Activated CD8-positive, alpha-beta T cell treated with anti-CD3 and anti-CD28 coated beads for 36 hours (primary cell): ENCODE measurements at regions of chr17 and their contacts with region 1.

Region 1: GRCh38 chr17:77429919-77430752 is 289.4 kb downstream of the SEC14L1 start:
- DNase-seq: peak; percentile 89
- ATAC-seq: peak; percentile 34
- H3K4me3 Mint-ChIP-seq: no peak overlapping the region
- H3K27ac Mint-ChIP-seq: peak overlapping the region; percentile 91
- H3K4me1 Mint-ChIP-seq: peaks cover 83% of the 10 kb centered on the region
- H3K27me3 Mint-ChIP-seq: no peaks in the 10 kb centered on the region
- CTCF ChIP-seq: peak; percentile 89

Region 2: GRCh38 chr17:77254951-77255825 is 174.9 kb before region 1 on chr17:
- CTCF ChIA-PET with region 1: no interaction called
- POLR2A ChIA-PET with region 1: no interaction called
- intact Hi-C with region 1: no loop called
- DNase-seq: no peak
- ATAC-seq: no peak
- H3K4me3 Mint-ChIP-seq: no peak overlapping the region
- H3K27ac Mint-ChIP-seq: no peak overlapping the region
- H3K4me1 Mint-ChIP-seq: no peaks in the 10 kb centered on the region
- H3K27me3 Mint-ChIP-seq: no peaks in the 10 kb centered on the region
- CTCF ChIP-seq: no peak

Region 3: GRCh38 chr17:77317091-77317750 is 112.9 kb before region 1 on chr17:
- CTCF ChIA-PET with region 1: no interaction called
- POLR2A ChIA-PET with region 1: no interaction called
- intact Hi-C with region 1: no loop called
- DNase-seq: no peak
- ATAC-seq: no peak
- H3K4me3 Mint-ChIP-seq: no peak overlapping the region
- H3K27ac Mint-ChIP-seq: no peak overlapping the region
- H3K4me1 Mint-ChIP-seq: peaks cover 15% of the 10 kb centered on the region
- H3K27me3 Mint-ChIP-seq: no peaks in the 10 kb centered on the region
- CTCF ChIP-seq: no peak

Region 4: GRCh38 chr17:77444984-77445759 is 15.0 kb after region 1 on chr17:
- CTCF ChIA-PET with region 1: interaction called, 70 read pairs
- POLR2A ChIA-PET with region 1: interaction called, 410 read pairs
- intact Hi-C with region 1: no loop called
- DNase-seq: peak; percentile 93
- ATAC-seq: peak; percentile 50
- H3K4me3 Mint-ChIP-seq: peak overlapping the region; percentile 77
- H3K27ac Mint-ChIP-seq: peak overlapping the region; percentile 94
- H3K4me1 Mint-ChIP-seq: peaks cover 91% of the 10 kb centered on the region
- H3K27me3 Mint-ChIP-seq: no peaks in the 10 kb centered on the region
- CTCF ChIP-seq: no peak

Region 5: GRCh38 chr17:77456951-77457548 is 26.9 kb after region 1 on chr17:
- CTCF ChIA-PET with region 1: interaction called, 70 read pairs
- POLR2A ChIA-PET with region 1: interaction called, 410 read pairs
- intact Hi-C with region 1: no loop called
- DNase-seq: peak; percentile 70
- ATAC-seq: peak; percentile 5
- H3K4me3 Mint-ChIP-seq: peak overlapping the region; percentile 84
- H3K27ac Mint-ChIP-seq: peak overlapping the region; percentile 96
- H3K4me1 Mint-ChIP-seq: peaks cover 22% of the 10 kb centered on the region
- H3K27me3 Mint-ChIP-seq: no peaks in the 10 kb centered on the region
- CTCF ChIP-seq: peak; percentile 38

Region 6: DNA sequence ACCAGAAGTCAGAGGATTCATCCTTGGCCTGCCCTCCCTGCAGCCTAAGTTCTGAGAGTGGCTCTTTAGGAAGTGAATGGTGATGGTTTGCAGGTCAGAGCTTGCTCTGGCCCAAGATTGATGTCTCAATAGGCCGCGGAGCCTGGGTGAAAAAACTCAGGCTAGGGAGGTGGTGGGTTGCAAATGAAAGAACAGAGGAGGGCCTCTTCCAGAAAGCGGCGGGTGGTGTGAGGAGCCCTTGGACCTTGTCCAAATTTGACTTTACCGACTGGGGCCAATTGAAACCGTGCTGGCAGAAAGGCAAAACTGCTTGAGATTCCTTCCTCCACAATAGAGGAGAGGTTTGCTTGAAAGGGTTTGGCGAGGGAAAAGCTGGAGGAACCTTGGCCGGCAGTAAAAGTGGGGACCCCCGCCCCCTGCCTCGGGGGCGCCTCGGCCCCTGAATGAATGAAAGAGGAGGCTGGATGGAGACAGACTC is 41.9 kb after region 1 on chr17:
- CTCF ChIA-PET with region 1: interaction called, 47 read pairs
- POLR2A ChIA-PET with region 1: interaction called, 53 read pairs
- intact Hi-C with region 1: loop called (anchors 5 kb)
- DNase-seq: peak; percentile 26
- ATAC-seq: no peak
- H3K4me3 Mint-ChIP-seq: peak overlapping the region; percentile 69
- H3K27ac Mint-ChIP-seq: peak overlapping the region; percentile 87
- H3K4me1 Mint-ChIP-seq: peaks cover 94% of the 10 kb centered on the region
- H3K27me3 Mint-ChIP-seq: no peaks in the 10 kb centered on the region
- CTCF ChIP-seq: no peak

Region 7: DNA sequence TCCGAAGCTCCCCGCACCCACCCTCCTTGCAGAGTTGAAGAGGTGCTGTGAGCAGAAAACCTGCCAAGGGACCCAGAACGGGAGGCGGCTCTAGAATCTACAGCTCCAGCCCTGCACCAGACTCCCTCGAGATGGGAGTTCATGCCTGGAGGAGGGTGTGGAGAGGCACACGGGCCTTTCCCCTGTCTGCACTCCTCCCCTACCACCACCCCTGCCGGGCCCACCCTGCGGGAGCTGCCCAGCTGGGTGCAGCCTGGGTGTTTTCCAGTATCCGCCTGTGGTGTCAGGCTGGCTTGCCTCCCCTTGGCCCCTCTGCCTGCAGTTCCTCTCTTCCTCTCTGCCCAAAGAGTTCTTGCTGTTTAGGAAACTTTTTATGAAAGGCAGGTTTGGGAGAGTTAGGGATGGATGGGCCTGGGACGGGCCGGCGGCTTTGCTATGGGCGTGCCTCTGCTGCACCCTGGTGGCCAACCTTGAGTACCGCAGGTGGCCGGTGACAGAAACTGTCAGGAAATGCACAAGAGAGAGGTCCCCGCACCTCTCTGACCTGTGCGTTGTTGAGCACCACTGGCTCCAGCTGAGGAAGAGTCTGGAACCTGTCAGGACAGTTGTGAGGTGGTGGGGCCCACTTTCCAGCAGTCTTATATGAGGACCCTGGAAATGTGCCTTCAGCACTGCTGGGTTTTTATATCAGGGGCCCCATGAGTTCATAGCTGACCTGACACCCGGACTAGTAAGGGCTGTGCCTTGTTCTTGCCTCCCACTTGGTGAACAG is 64.7 kb after region 1 on chr17:
- CTCF ChIA-PET with region 1: interaction called, 122 read pairs
- POLR2A ChIA-PET with region 1: interaction called, 9 read pairs
- intact Hi-C with region 1: loop called (anchors 2 kb)
- DNase-seq: peak; percentile 81
- ATAC-seq: peak; percentile 76
- H3K4me3 Mint-ChIP-seq: no peak overlapping the region
- H3K27ac Mint-ChIP-seq: peak overlapping the region; percentile 44
- H3K4me1 Mint-ChIP-seq: peaks cover 27% of the 10 kb centered on the region
- H3K27me3 Mint-ChIP-seq: no peaks in the 10 kb centered on the region
- CTCF ChIP-seq: peak; percentile 100